Spleen (tissue), 13 donors: ENCODE measurements at regions of chr14 and their contacts with region 1.

Region 1: DNA sequence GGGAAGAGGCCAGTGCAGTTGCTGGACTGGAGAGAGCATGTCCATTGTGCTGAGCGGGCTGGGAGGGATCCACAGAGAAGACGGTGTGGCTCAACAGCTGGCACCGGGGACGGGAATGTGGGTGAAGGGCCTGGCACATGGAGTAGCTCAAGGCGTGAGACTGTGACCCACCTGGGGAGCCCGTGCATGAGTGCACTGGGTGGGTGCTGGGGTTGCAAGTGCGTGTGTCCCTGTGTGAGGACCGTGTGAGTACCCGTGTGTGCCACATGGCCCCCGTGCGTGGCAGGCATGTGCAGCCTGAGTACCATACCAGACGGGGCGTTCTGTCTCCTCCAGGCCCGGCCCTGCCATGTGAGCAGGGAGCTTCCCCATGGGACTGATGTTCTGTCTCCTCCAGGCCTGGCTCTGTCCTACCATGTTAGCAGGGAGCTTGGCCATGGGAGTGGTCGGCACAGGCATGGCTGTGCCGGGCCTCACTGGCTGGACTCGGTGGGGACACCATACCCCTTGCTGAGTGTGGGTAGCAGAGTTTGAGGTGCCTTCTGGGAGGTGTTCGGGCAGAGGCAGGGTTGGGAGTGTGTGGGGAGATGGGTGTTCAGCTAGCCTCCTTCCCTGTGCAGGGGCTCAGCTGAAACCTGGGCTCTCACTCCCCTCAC is 234.4 kb downstream of the TMEM121 start:
- DNase-seq: peak; percentile 52
- H3K4me3 ChIP-seq: no peak overlapping the region
- H3K27ac ChIP-seq: no peak overlapping the region
- H3K4me1 ChIP-seq: no peaks in the 10 kb centered on the region
- H3K27me3 ChIP-seq: no peaks in the 10 kb centered on the region
- CTCF ChIP-seq: no peak
- POLR2A ChIP-seq: no peak

Region 2: GRCh38 chr14:105617201-105617777 is 143.5 kb before region 1 on chr14:
- intact Hi-C with region 1: loop called (anchors 5 kb)
- DNase-seq: no peak
- H3K4me3 ChIP-seq: no peak overlapping the region
- H3K27ac ChIP-seq: no peak overlapping the region
- H3K4me1 ChIP-seq: no peaks in the 10 kb centered on the region
- H3K27me3 ChIP-seq: no peaks in the 10 kb centered on the region
- CTCF ChIP-seq: peak in 1 of 11 experiments; percentile 6
- POLR2A ChIP-seq: no peak